ENCODE measurements at regions of chr17 and their contacts with region 1.

Region 1: GRCh38 chr17:32609085-32609484 is 122.3 kb downstream of the CDK5R1 start:
- DNase-seq: peak; percentile 48 to 81 (median 72)
- ATAC-seq: peak; percentile 100
- H3K4me3 ChIP-seq: no peak overlapping the region
- H3K4me3 Mint-ChIP-seq: no peak overlapping the region
- H3K27ac ChIP-seq: no peak overlapping the region
- H3K27ac Mint-ChIP-seq: peak overlapping the region in 2 of 9 donors; percentile 0 to 14
- H3K4me1 ChIP-seq: no peaks in the 10 kb centered on the region
- H3K4me1 Mint-ChIP-seq: peaks cover 6 to 9% (median 8%) of the 10 kb centered on the region in 7 donors
- H3K27me3 ChIP-seq: no peaks in the 10 kb centered on the region
- H3K27me3 Mint-ChIP-seq: peaks cover 0 to 6% (median 0%) of the 10 kb centered on the region in 5 donors

Region 2: DNA sequence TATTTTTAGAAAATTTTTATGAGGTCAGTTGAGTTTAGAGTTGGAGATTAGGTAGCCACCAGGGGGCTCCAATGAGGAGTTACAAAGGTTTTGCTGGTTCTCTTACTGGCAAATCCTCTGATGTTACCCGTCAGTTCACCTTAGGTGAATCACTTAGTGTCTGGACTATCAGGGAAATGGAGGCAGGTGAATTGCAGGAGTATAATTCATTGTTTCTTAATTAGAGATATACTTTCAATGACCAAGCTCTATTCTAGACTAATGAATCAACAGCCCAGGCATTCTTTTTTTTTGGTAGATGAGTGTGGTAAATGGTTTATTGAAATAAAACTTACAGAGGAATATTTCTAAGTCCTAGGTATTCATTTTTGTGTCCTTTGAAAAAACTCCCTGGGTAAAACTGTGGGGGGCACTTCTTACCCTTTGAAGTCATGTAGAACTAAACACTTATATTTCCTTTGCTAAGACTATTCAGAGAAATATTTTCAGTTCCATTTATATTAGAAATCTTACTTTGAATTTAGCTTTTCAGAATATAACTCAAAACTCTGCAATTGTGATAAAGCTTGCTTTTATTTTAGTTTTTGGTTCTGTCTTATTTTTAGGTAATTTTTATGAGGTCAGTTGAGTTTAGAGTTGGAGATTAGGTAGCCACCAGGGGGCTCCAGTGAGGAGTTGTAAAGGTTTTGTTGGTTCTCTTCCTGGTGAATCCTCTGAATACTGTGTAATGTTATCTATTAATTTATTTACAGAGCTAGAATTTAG is 147.1 kb before region 1 on chr17:
- CTCF ChIA-PET with region 1: interaction called, 17 read pairs
- POLR2A ChIA-PET with region 1: no interaction called
- intact Hi-C with region 1: loop called (anchors 1 kb)
- DNase-seq: peak; percentile 27 to 71 (median 63)
- ATAC-seq: peak; percentile 91
- H3K4me3 ChIP-seq: no peak overlapping the region
- H3K4me3 Mint-ChIP-seq: peak overlapping the region in 1 of 10 donors; percentile 15
- H3K27ac ChIP-seq: no peak overlapping the region
- H3K27ac Mint-ChIP-seq: peak overlapping the region in 7 of 9 donors; percentile 0 to 87 (median 19)
- H3K4me1 ChIP-seq: peaks cover 8 to 9% of the 10 kb centered on the region in 2 donors
- H3K4me1 Mint-ChIP-seq: peaks cover 25 to 43% (median 31%) of the 10 kb centered on the region in 7 donors
- H3K27me3 ChIP-seq: no peaks in the 10 kb centered on the region
- H3K27me3 Mint-ChIP-seq: no peaks in the 10 kb centered on the region

Region 3: GRCh38 chr17:32503251-32504165 is 105.6 kb before region 1 on chr17:
- CTCF ChIA-PET with region 1: no interaction called
- POLR2A ChIA-PET with region 1: no interaction called
- intact Hi-C with region 1: loop called in 1 of 2 experiments (anchors 1 kb)
- DNase-seq: peak in 8 of 9 donors; percentile 45 to 83 (median 78)
- ATAC-seq: peak; percentile 94
- H3K4me3 ChIP-seq: peak overlapping the region; percentile 36
- H3K4me3 Mint-ChIP-seq: peak overlapping the region; percentile 64 to 83 (median 73)
- H3K27ac ChIP-seq: peak overlapping the region; percentile 70
- H3K27ac Mint-ChIP-seq: peak overlapping the region; percentile 93 to 100 (median 98)
- H3K4me1 ChIP-seq: peaks cover 45 to 70% of the 10 kb centered on the region in 2 donors
- H3K4me1 Mint-ChIP-seq: peaks cover 50 to 91% (median 77%) of the 10 kb centered on the region in 7 donors
- H3K27me3 ChIP-seq: no peaks in the 10 kb centered on the region
- H3K27me3 Mint-ChIP-seq: no peaks in the 10 kb centered on the region

Region 4: DNA sequence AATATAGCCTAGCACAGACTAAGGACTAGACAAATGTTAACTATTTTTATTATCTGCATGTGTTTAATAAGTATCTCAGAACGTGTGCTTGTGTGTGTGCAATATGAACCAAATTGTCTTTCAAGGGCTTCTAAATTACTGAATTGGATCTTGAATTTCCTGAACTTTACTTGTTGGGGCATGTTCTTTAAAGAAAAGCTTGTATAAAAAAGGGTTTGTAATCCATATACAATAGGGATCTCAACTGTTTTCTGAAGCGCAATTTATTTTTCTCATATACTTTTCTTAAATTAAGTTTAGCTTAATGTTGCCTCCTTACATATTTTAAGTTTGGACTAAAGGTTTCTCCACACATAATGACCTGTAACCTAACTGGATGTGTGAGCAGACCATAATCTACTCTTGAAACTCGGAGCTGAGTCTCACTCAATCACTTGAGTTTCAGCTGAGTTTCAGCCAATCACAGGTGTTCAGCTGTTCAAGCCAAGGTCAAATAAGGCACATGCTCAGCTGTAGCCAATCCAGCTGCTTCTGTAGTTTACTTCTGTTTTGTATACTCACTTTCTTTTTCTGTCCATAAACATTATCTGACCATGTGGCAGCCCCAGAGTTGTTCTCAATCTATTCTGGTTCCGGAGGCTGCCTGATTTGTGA is 50.0 kb before region 1 on chr17:
- CTCF ChIA-PET with region 1: interaction called, 6 read pairs
- POLR2A ChIA-PET with region 1: no interaction called
- intact Hi-C with region 1: loop called in 1 of 2 experiments (anchors 2 kb)
- DNase-seq: no peak
- ATAC-seq: peak; percentile 46
- H3K4me3 ChIP-seq: no peak overlapping the region
- H3K4me3 Mint-ChIP-seq: peak overlapping the region in 5 of 10 donors; percentile 65 to 84 (median 69)
- H3K27ac ChIP-seq: no peak overlapping the region
- H3K27ac Mint-ChIP-seq: peak overlapping the region in 6 of 9 donors; percentile 16 to 86 (median 66)
- H3K4me1 ChIP-seq: peaks cover 7% of the 10 kb centered on the region in 2 donors
- H3K4me1 Mint-ChIP-seq: peaks cover 0 to 38% (median 34%) of the 10 kb centered on the region in 7 donors
- H3K27me3 ChIP-seq: no peaks in the 10 kb centered on the region
- H3K27me3 Mint-ChIP-seq: no peaks in the 10 kb centered on the region

Region 5: GRCh38 chr17:32755045-32755805 is 146.1 kb after region 1 on chr17:
- CTCF ChIA-PET with region 1: no interaction called
- POLR2A ChIA-PET with region 1: no interaction called
- intact Hi-C with region 1: loop called in 1 of 2 experiments (anchors 1 kb)
- DNase-seq: peak in 7 of 9 donors; percentile 33 to 64 (median 57)
- ATAC-seq: peak; percentile 94
- H3K4me3 ChIP-seq: no peak overlapping the region
- H3K4me3 Mint-ChIP-seq: no peak overlapping the region
- H3K27ac ChIP-seq: no peak overlapping the region
- H3K27ac Mint-ChIP-seq: no peak overlapping the region
- H3K4me1 ChIP-seq: peaks cover 7% of the 10 kb centered on the region in 2 donors
- H3K4me1 Mint-ChIP-seq: peaks cover 5 to 13% (median 12%) of the 10 kb centered on the region in 7 donors
- H3K27me3 ChIP-seq: no peaks in the 10 kb centered on the region
- H3K27me3 Mint-ChIP-seq: no peaks in the 10 kb centered on the region

Region 6: DNA sequence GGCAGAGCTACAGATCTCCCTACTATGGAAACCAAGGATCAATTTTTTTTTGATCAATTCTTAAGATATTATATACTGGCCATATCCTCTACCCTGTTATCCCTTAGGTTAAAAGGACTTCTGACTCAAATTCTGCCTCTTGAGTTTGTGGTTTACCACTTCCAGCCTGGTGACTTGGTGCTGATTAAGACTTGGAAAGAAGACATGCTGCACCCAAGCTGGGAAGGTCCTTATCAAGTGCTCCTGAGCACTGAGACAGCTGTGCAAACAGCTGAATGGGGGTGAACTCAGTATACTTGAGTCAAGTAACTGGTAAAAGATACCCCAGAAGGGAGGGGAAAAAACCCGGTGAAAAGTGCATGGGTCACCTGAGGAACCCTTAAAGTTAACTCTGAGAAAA is 362.1 kb after region 1 on chr17:
- CTCF ChIA-PET with region 1: no interaction called
- POLR2A ChIA-PET with region 1: no interaction called
- intact Hi-C with region 1: no loop called
- DNase-seq: peak in 1 of 9 donors; percentile 27
- ATAC-seq: no peak
- H3K4me3 ChIP-seq: no peak overlapping the region
- H3K4me3 Mint-ChIP-seq: peak overlapping the region in 1 of 10 donors; percentile 10
- H3K27ac ChIP-seq: no peak overlapping the region
- H3K27ac Mint-ChIP-seq: no peak overlapping the region
- H3K4me1 ChIP-seq: no peaks in the 10 kb centered on the region
- H3K4me1 Mint-ChIP-seq: peaks cover 0 to 19% (median 0%) of the 10 kb centered on the region in 7 donors
- H3K27me3 ChIP-seq: no peaks in the 10 kb centered on the region
- H3K27me3 Mint-ChIP-seq: peaks cover 0 to 23% (median 9%) of the 10 kb centered on the region in 5 donors

Measured in naive thymus-derived CD4-positive, alpha-beta T cell (primary cell).